ENCODE measurements at regions of chr5 and their contacts with region 1.

Region 1: GRCh38 chr5:159427180-159428012 is 97.1 kb upstream of the IL12B start:
- DNase-seq: no peak
- ATAC-seq: no peak

Region 2: GRCh38 chr5:158940977-158941376 is 486.4 kb before region 1 on chr5:
- intact Hi-C with region 1: no loop called
- DNase-seq: no peak
- ATAC-seq: no peak

Region 3: GRCh38 chr5:159178978-159179377 is 248.4 kb before region 1 on chr5:
- intact Hi-C with region 1: no loop called
- DNase-seq: no peak
- ATAC-seq: peak; percentile 56

Region 4: DNA sequence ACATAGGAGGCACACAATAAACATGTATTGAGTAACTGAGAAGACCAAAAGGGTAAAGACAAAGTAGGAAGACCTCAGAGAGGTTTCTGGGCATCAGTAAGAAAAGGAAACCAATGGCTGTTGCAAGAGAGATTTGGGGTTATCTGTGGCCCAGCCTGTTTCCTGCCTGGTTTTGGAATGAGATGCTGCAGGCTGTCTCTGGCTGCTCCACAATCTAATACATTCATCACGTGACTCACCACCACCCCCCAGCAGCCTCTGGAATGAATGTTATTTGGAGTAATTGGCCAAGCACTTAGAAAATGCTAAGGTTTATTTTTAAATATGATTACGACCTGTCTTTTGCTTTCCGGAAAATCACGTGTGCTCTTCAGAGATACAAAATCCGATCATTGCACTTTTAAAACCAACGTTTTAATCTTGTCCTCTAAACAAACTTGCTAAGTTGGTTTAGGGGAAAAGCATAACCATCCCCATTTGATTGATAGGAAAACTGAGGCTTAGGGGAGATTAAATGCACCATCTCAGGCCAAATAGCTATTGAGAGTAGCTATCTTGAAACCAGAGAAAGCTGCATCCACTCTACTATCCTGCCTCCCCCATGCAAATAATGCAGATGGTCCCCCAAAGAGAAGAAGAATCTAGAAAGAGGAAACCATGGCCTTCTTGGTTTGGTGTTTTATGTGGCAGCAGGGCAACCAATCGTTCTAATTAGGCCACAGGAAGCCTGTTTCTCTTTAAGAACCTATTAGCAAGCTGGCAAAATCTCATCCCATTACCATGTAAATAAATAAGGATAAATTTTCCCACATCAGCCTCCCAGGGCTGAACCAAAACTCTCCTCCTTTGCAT is 337.1 kb after region 1 on chr5:
- intact Hi-C with region 1: no loop called
- DNase-seq: no peak
- ATAC-seq: peak; percentile 77

Region 5: GRCh38 chr5:159987031-159987674 is 559.8 kb after region 1 on chr5:
- intact Hi-C with region 1: loop called (anchors 10 kb)
- DNase-seq: peak; percentile 87
- ATAC-seq: peak; percentile 98